Right ventricle myocardium inferior (tissue), 1 donor: ENCODE measurements at regions of chr7 and their contacts with region 1.

Region 1: DNA sequence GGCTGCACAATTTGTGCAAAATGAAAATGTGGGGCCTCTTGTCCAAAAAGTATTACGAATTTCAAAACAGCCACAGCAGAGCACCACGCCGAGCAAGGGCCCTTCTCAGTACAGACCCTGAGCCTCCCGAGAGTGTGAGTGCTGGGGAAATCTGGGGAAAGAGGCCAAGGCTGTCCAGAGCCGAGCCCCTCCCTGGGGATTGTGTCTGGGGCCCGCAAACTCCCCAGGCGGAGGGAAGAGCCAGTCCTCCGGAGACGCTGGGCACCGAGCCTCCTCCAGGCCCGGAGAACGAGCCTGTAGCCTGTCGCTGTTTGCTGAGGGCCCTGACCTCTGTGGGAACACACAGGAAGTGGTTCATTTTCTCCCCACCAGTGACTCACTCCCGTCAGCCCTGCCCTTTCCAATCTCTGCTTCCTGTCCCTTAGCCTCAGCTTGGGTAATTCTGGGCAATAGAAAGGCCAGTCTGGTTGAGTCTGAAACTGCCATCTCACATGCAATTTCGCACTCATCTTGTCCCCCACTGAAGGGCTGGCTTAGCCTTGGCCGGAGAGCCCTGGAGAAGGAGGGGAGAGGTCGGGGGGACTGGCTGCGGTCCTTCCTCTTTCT is 19.5 kb upstream of the GNA12 start:
- DNase-seq: peak; percentile 88
- ATAC-seq: peak; percentile 97

Region 2: DNA sequence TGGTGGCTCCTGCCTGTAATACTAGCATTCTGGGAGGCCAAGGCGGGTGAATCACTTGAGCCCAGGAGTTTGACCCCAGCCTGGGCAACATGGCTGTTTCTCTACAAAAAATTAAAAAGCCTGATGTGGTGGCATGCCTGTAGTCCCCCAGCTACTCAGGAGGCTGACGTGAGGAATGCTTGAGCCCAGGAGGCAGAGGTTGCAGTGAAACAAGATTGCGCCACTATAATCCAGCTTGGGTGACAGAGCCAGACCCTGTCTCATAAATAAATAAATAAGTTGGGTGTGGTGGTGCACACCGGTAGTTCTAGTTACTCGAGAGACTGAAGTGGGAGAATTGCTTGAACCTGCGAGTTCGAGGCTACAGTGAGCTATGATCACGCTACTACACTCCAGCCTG is 84.5 kb before region 1 on chr7:
- intact Hi-C with region 1: no loop called
- DNase-seq: no peak
- ATAC-seq: no peak

Region 3: DNA sequence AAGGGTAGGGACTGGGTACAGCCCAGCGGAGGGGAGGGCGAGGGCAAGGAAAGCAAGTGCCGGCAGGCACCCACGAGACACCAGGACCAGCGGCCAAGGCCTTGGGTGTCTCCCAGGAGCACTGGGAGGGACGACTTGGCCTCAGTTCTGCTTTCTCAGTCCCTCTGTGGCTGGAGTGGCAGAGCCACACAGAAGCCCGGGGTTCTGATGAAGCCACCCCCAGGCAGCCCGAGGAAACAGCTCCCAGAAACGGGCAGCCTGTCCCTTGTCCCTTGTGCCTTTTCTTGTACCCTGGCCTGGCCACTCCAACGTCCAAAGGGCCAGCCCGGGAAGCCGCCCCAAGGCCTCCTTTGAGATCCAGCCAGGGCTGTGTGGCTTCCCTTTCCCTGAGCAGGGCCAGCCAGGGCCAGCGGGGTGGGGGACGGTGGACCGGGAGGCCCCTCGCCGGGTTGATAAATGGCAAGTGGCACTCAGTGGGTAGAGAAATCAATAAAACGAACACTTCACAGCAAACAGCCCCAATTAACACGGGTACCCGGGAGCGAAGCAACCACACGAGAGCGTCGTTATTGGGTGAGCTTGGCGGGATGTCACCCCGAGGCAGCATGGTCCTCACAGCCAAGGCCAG is 50.3 kb after region 1 on chr7:
- intact Hi-C with region 1: no loop called
- DNase-seq: no peak
- ATAC-seq: no peak

Region 4: DNA sequence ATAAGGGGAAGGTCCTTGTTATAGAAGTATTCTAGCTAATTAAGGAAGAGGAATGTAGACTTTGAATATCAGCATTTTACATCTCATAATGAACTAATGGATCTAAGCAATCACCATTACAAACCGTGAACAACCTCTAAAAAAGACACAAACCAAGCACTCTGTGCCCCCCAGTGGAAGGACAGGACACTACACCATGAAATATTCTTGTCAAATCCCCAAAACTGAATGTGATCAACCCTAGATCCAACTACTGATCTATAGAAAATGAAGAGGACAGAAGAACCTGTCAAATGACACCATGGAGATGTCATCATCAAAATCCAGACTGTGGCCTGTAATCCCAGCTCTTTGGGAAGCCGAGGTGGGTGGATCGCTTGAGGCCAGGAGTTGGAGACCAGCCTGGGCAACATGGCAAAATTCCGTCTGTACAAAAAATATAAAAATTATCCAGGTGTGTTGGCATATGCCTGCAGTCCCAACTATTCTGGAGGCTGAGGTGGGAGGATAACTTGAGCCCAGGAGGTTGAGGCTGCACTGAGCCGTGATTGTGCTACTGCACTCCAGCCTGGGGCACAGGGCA is 291.4 kb after region 1 on chr7:
- intact Hi-C with region 1: loop called (anchors 5 kb)
- DNase-seq: no peak
- ATAC-seq: no peak

Region 5: DNA sequence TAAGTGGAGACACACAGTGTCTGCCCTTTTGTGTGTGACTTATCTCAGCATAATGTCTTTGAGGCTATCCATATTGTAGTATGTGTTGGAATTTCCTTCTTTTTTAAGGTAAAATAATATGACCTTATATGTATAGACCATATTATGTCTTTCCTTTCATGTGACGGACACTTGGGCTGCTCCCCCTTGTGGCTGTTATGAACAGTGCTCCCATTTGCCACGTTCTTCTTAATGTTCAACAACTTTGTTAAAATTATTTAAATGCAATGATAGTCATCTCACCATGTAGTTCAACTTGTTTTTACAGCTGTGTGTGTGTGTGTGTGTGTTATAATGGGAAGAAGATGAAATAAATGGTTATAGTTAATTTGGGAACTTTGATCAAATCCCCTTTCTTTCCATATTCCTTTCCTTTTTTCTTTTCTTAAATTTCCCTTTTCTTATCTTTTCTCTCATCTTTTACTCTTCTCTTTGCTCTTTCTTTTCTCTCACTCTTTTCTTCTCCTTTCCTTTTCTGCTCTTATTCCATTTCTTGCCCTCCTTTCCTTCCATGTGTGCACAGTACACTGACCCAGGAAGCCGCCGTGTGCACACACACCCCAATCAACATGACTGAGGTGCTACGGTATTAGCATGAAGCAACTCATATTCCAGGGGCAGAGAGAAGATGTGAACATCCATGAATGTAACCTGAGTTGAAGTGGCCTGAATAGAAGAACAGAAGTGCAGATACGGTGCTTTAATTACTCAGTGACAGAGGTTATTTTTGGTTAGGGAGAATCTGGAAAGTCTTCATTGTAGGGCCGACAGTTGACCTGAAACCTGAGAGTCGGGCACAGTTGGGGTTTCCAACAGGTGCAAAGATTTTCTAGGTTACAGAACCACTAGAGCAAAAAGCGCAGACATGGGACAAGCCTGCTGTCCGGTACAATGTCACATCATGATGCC is 1034.1 kb after region 1 on chr7:
- intact Hi-C with region 1: loop called (anchors 2 kb)
- DNase-seq: no peak
- ATAC-seq: no peak